ENCODE measurements at regions of chr21 and their contacts with region 1.

Region 1: GRCh38 chr21:35051287-35051818 is 2.3 kb upstream of the RUNX1 start:
- DNase-seq: peak; percentile 88 to 94
- ATAC-seq: peak; percentile 75 to 86 (median 80)
- H3K4me3 ChIP-seq: peak overlapping the region; percentile 41
- H3K27ac ChIP-seq: peak overlapping the region; percentile 96
- H3K4me1 ChIP-seq: peaks cover 39% of the 10 kb centered on the region
- H3K27me3 ChIP-seq: no peaks in the 10 kb centered on the region
- CTCF ChIP-seq: peak; percentile 71

Region 2: DNA sequence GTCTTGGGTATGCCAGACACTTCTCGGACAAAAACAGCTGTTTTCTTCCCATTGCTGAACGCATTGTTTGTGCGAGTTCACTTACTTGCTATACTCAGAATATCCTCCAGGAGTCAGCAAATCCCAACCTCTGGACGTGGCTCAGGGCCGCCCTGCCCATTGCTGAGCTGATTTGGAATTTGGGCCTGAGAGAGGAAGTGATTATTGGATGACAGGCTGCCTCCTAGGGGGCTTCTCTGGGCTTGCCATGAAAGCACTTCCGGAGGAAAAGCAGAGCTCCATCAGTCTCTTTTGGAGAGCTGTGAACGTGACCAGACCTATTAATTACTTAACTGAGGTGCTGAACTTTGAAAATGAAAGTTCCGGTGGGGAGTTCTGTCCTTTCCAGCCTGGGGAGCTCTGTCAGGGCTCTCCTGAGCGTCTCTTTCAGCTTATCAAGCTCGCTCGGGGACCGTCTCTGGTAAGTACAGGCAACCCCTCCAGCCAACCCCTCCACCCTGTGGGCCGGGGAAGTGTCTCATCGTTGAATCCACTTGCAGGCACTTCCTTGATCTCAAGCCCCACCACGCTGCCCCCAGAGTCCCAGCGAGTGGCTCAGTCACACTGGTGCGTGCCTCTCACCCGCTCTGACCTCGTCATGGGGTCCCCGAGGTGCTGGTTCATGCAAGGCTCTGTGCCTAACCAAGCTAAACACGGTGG is 305.6 kb before region 1 on chr21:
- intact Hi-C with region 1: loop called in 1 of 2 experiments (anchors 10 kb)
- DNase-seq: peak; percentile 64 to 81
- ATAC-seq: peak; percentile 80 to 96 (median 84)
- H3K4me3 ChIP-seq: no peak overlapping the region
- H3K27ac ChIP-seq: peak overlapping the region; percentile 17
- H3K4me1 ChIP-seq: peaks cover 8% of the 10 kb centered on the region
- H3K27me3 ChIP-seq: peaks cover 0 to 5% (median 0%) of the 10 kb centered on the region in 3 donors
- CTCF ChIP-seq: peak; percentile 93

Region 3: GRCh38 chr21:35204850-35205541 is 153.6 kb after region 1 on chr21:
- intact Hi-C with region 1: loop called in 1 of 2 experiments (anchors 2 kb)
- DNase-seq: peak; percentile 70 to 72
- ATAC-seq: peak in 1 of 4 donors; percentile 7
- H3K4me3 ChIP-seq: peak overlapping the region; percentile 29
- H3K27ac ChIP-seq: peak overlapping the region; percentile 85
- H3K4me1 ChIP-seq: peaks cover 61% of the 10 kb centered on the region
- H3K27me3 ChIP-seq: no peaks in the 10 kb centered on the region
- CTCF ChIP-seq: no peak

Region 4: DNA sequence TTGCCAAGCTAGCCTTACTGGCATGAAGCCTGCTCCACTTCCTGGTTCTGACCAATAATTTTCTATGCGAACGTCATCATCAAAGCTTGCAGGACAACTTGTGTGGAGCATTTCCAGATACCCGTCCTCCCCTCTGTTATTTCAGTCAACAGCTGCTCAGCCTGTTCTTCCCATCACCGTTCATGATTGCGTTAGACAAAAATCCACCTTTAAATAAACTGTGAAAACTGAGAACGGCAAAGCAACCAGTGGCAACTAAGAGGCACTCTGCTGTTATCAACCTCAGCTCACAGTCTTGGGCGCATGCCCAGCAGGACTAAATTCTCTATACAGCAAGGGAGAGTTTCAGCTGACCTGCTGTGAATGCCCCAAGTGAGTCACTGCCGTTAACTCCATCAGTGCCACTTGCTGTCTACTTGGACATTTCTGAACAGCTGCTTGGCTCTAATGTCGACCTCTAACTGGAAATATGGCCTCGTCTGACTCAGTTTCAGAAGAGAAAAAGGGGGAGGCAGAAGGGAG is 205.2 kb after region 1 on chr21:
- intact Hi-C with region 1: loop called in 1 of 2 experiments (anchors 1 kb)
- DNase-seq: peak; percentile 91 to 97
- ATAC-seq: peak; percentile 89 to 95 (median 90)
- H3K4me3 ChIP-seq: peak overlapping the region; percentile 27
- H3K27ac ChIP-seq: peak overlapping the region; percentile 97
- H3K4me1 ChIP-seq: peaks cover 53% of the 10 kb centered on the region
- H3K27me3 ChIP-seq: no peaks in the 10 kb centered on the region
- CTCF ChIP-seq: no peak

Region 5: GRCh38 chr21:35386491-35387079 is 335.2 kb after region 1 on chr21:
- intact Hi-C with region 1: no loop called
- DNase-seq: no peak
- ATAC-seq: no peak
- H3K4me3 ChIP-seq: no peak overlapping the region
- H3K27ac ChIP-seq: no peak overlapping the region
- H3K4me1 ChIP-seq: no peaks in the 10 kb centered on the region
- H3K27me3 ChIP-seq: no peaks in the 10 kb centered on the region
- CTCF ChIP-seq: no peak

Region 6: GRCh38 chr21:35400233-35400957 is 349.0 kb after region 1 on chr21:
- intact Hi-C with region 1: loop called (anchors 2 to 5 kb)
- DNase-seq: no peak
- ATAC-seq: peak; percentile 89 to 97 (median 91)
- H3K4me3 ChIP-seq: peak overlapping the region; percentile 6
- H3K27ac ChIP-seq: no peak overlapping the region
- H3K4me1 ChIP-seq: peaks cover 10% of the 10 kb centered on the region
- H3K27me3 ChIP-seq: no peaks in the 10 kb centered on the region
- CTCF ChIP-seq: peak; percentile 57

Measured in psoas muscle (tissue), 8 donors.